Activated CD4-positive, alpha-beta memory T cell treated with anti-CD3 and anti-CD28 coated beads, Interleukin-2, amount 10 ng/mL, durations not matched to agents 7 days and 5 days (primary cell): ENCODE measurements at regions of chr12 and their contacts with region 1.

Region 1: GRCh38 chr12:112978163-112979040 is at the start of gene OAS2:
- DNase-seq: peak; percentile 91
- H3K4me3 Mint-ChIP-seq: peak within 1 kb of the TSS; percentile 87
- H3K27ac Mint-ChIP-seq: peak within 1 kb of the TSS; percentile 100
- H3K4me1 Mint-ChIP-seq: peaks cover 43% of the 10 kb centered on the region
- H3K27me3 Mint-ChIP-seq: no peaks in the 10 kb centered on the region
- total RNA-seq, gene OAS2: 327 to 331 TPM

Region 2: GRCh38 chr12:112906712-112907414 is 71.5 kb before region 1 on chr12 and contains the start of gene OAS1:
- CTCF ChIA-PET with region 1: interaction called, 35 read pairs
- POLR2A ChIA-PET with region 1: interaction called, 183 read pairs
- DNase-seq: peak; percentile 69
- H3K4me3 Mint-ChIP-seq: peak within 1 kb of the TSS; percentile 100
- H3K27ac Mint-ChIP-seq: peak within 1 kb of the TSS; percentile 99
- H3K4me1 Mint-ChIP-seq: peaks cover 78% of the 10 kb centered on the region
- H3K27me3 Mint-ChIP-seq: no peaks in the 10 kb centered on the region
- total RNA-seq, gene OAS1: 246 to 248 TPM

Region 3: DNA sequence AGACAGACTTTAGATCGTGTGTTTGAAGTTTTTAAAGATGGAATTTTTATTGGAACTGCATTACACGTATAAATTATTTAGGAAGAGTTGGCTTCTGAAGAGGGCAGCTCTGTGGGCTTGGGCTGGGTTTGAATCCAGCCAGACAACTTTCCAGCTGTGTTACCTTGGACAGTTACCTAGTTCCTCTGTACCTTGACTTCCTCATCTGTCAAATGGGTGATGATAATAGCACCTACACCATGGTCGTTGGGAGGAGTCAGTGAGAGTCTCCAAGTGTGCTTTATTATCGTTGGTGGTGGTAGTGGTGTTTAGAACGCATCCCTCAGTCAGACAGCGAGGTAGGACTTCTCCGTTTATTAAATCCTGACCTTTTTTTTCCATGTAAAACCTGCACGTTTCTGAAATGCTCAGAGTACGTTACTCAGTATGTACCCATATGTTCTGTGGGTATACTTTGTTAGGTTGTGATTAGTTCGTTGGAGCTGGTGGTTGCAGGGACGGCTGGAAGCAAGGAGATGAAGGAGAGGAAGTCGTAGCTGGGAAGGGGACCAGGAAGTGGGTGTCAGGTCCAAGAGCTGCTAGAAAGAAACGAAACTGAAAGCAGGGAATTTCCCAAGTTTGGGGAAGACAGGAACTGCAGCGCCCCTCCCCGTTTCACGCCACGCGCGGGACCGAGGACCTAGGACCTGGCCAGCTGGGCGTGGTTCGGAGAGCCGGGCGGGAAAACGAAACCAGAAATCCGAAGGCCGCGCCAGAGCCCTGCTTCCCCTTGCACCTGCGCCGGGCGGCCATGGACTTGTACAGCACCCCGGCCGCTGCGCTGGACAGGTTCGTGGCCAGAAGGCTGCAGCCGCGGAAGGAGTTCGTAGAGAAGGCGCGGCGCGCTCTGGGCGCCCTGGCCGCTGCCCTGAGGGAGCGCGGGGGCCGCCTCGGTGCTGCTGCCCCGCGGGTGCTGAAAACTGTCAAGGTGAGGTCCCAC is 40.4 kb before region 1 on chr12 and contains the start of gene OAS3:
- CTCF ChIA-PET with region 1: interaction called, 11 read pairs
- POLR2A ChIA-PET with region 1: interaction called, 55 read pairs
- DNase-seq: peak; percentile 82
- H3K4me3 Mint-ChIP-seq: peak within 1 kb of the TSS; percentile 82
- H3K27ac Mint-ChIP-seq: peak within 1 kb of the TSS; percentile 93
- H3K4me1 Mint-ChIP-seq: peaks cover 51% of the 10 kb centered on the region
- H3K27me3 Mint-ChIP-seq: no peaks in the 10 kb centered on the region
- total RNA-seq, gene OAS3: 260 to 265 TPM

Region 4: DNA sequence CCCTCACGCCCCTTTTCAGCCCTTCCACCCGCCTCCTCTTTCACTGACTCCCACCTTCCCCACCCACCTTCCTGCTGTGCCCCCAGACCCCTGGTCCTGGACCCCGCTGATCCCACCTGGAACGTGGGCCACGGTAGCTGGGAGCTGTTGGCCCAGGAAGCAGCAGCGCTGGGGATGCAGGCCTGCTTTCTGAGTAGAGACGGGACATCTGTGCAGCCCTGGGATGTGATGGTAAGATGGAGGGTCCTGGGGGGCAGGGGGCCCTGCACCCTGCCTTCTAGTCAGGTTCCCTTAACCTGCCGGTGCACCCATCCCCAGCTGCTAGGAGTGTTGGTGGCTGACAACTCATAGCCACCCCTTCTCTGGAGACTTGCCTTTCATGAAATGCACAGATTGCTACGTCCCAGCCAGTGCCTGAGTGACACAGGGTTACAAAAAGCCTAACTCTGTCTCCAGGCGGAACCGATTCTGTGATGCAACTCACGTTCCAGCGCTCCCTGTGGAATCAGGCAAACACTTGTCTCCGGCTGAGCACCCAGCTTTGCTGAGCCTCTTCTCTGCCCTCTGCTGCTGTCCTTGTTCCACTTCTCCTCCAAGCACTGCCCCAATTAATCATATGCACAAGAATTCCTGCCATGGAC is 15.1 kb before region 1 on chr12:
- CTCF ChIA-PET with region 1: interaction called, 3 read pairs
- POLR2A ChIA-PET with region 1: interaction called, 22 read pairs
- DNase-seq: no peak
- H3K4me3 Mint-ChIP-seq: no peak overlapping the region
- H3K27ac Mint-ChIP-seq: no peak overlapping the region
- H3K4me1 Mint-ChIP-seq: peaks cover 17% of the 10 kb centered on the region
- H3K27me3 Mint-ChIP-seq: no peaks in the 10 kb centered on the region

Region 5: DNA sequence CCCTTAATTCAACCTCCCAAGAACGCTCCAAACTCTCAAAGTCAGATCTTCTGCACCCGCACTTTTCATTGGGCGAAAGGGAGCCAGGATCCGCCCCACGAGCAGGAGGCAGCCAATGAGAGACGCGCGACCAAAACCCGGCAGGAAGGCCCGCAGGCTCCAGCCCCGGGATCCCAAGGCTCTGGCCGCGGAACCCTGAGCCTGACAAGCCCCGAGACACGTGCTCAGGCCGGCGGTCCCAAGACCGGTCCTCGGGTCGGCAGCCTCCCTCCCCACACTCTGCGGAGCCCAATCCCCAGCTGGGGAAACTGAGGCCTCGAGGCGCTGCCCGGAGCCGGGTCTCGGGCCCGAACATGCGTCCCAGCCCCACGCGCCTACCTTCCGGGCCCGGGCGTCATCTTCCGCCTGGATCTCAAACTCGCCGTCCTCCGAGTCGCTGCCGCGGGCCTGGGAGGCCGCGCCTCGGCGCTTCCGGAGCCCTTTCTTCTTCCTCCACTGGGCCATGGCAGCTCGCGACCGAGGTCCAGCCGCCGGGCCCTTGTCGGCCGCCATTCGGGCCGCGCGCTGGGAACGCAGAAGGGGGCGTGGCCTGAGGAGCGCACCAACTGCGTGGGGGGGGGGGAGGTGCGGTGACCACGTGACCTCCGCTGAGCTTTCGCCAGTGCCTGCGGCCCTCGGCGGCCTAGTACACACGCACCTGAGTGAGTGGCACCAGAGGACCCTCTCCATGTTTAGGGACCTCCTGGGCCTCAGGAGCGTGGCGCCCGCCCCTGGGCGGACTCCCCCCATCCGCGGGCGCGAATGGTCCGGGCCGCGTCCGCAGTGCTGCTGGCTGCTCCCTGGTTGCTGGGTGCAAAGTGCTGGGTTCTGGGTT is 206.7 kb after region 1 on chr12 and contains the starts of genes DDX54 and RITA1:
- CTCF ChIA-PET with region 1: interaction called, 3 read pairs
- POLR2A ChIA-PET with region 1: interaction called, 18 read pairs
- DNase-seq: peak; percentile 91
- H3K4me3 Mint-ChIP-seq: peak within 1 kb of the TSS; percentile 86
- H3K27ac Mint-ChIP-seq: peak within 1 kb of the TSS; percentile 97
- H3K4me1 Mint-ChIP-seq: peaks cover 26% of the 10 kb centered on the region
- H3K27me3 Mint-ChIP-seq: no peaks in the 10 kb centered on the region
- total RNA-seq, gene DDX54: 55.6 to 57.6 TPM
- total RNA-seq, gene RITA1: 14.7 to 16.9 TPM